ENCODE measurements at regions of chr10 and their contacts with region 1.

Region 1: GRCh38 chr10:123994417-123995081 is 98.8 kb downstream of the CHST15 start:
- DNase-seq: peak; percentile 58 to 88 (median 76)
- ATAC-seq: peak; percentile 76
- H3K4me3 ChIP-seq: peak overlapping the region; percentile 32
- H3K4me3 Mint-ChIP-seq: peak overlapping the region; percentile 52 to 82 (median 62)
- H3K27ac ChIP-seq: no peak overlapping the region
- H3K27ac Mint-ChIP-seq: no peak overlapping the region
- H3K4me1 ChIP-seq: peaks cover 9% of the 10 kb centered on the region in 2 donors
- H3K4me1 Mint-ChIP-seq: peaks cover 7 to 20% (median 13%) of the 10 kb centered on the region in 7 donors
- H3K27me3 ChIP-seq: peaks cover 0 to 17% of the 10 kb centered on the region in 2 donors
- H3K27me3 Mint-ChIP-seq: peaks cover 48 to 73% (median 58%) of the 10 kb centered on the region in 5 donors

Region 2: GRCh38 chr10:124020876-124021815 is 26.6 kb after region 1 on chr10:
- CTCF ChIA-PET with region 1: no interaction called
- POLR2A ChIA-PET with region 1: no interaction called
- intact Hi-C with region 1: no loop called
- DNase-seq: no peak
- ATAC-seq: no peak
- H3K4me3 ChIP-seq: no peak overlapping the region
- H3K4me3 Mint-ChIP-seq: no peak overlapping the region
- H3K27ac ChIP-seq: no peak overlapping the region
- H3K27ac Mint-ChIP-seq: no peak overlapping the region
- H3K4me1 ChIP-seq: no peaks in the 10 kb centered on the region
- H3K4me1 Mint-ChIP-seq: peaks cover 0 to 14% (median 8%) of the 10 kb centered on the region in 7 donors
- H3K27me3 ChIP-seq: no peaks in the 10 kb centered on the region
- H3K27me3 Mint-ChIP-seq: peaks cover 0 to 4% (median 3%) of the 10 kb centered on the region in 5 donors

Region 3: GRCh38 chr10:124221356-124222317 is 227.1 kb after region 1 on chr10:
- CTCF ChIA-PET with region 1: no interaction called
- POLR2A ChIA-PET with region 1: no interaction called
- intact Hi-C with region 1: loop called in 1 of 2 experiments (anchors 1 kb)
- DNase-seq: no peak
- ATAC-seq: no peak
- H3K4me3 ChIP-seq: no peak overlapping the region
- H3K4me3 Mint-ChIP-seq: peak overlapping the region in 1 of 10 donors; percentile 37
- H3K27ac ChIP-seq: no peak overlapping the region
- H3K27ac Mint-ChIP-seq: peak overlapping the region in 1 of 9 donors; percentile 33
- H3K4me1 ChIP-seq: no peaks in the 10 kb centered on the region
- H3K4me1 Mint-ChIP-seq: peaks cover 0 to 25% (median 0%) of the 10 kb centered on the region in 7 donors
- H3K27me3 ChIP-seq: no peaks in the 10 kb centered on the region
- H3K27me3 Mint-ChIP-seq: peaks cover 0 to 14% (median 5%) of the 10 kb centered on the region in 5 donors

Region 4: GRCh38 chr10:124259139-124259825 is 264.7 kb after region 1 on chr10:
- CTCF ChIA-PET with region 1: no interaction called
- POLR2A ChIA-PET with region 1: no interaction called
- intact Hi-C with region 1: loop called in 1 of 2 experiments (anchors 1 kb)
- DNase-seq: no peak
- ATAC-seq: no peak
- H3K4me3 ChIP-seq: no peak overlapping the region
- H3K4me3 Mint-ChIP-seq: no peak overlapping the region
- H3K27ac ChIP-seq: no peak overlapping the region
- H3K27ac Mint-ChIP-seq: no peak overlapping the region
- H3K4me1 ChIP-seq: no peaks in the 10 kb centered on the region
- H3K4me1 Mint-ChIP-seq: no peaks in the 10 kb centered on the region
- H3K27me3 ChIP-seq: no peaks in the 10 kb centered on the region
- H3K27me3 Mint-ChIP-seq: peaks cover 0 to 1% (median 0%) of the 10 kb centered on the region in 5 donors

Region 5: DNA sequence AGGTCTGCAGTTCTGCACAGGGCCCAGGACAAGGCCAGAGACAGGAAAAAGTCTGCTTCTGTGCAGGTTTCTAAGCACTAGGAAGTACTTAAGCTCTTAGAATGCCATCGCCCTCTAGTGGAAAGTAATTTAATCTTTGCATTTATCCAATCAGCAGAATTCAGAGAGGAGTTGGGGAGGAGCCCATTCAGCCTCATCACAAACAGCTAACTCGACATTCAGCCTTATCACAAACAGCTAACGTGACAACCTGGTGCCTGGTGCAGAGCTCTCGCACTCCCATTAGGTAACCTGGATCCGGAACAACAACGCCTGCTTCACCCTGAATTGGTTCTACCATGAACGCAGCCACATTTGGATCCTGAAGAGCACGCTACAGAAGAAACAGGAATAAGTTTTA is 409.0 kb after region 1 on chr10:
- CTCF ChIA-PET with region 1: interaction called, 6 read pairs
- POLR2A ChIA-PET with region 1: no interaction called
- intact Hi-C with region 1: loop called (anchors 1 kb)
- DNase-seq: peak in 7 of 9 donors; percentile 49 to 74 (median 67)
- ATAC-seq: peak; percentile 100
- H3K4me3 ChIP-seq: no peak overlapping the region
- H3K4me3 Mint-ChIP-seq: peak overlapping the region in 1 of 10 donors; percentile 38
- H3K27ac ChIP-seq: no peak overlapping the region
- H3K27ac Mint-ChIP-seq: peak overlapping the region; percentile 28 to 95 (median 75)
- H3K4me1 ChIP-seq: peaks cover 0 to 10% of the 10 kb centered on the region in 2 donors
- H3K4me1 Mint-ChIP-seq: peaks cover 8 to 11% (median 10%) of the 10 kb centered on the region in 7 donors
- H3K27me3 ChIP-seq: no peaks in the 10 kb centered on the region
- H3K27me3 Mint-ChIP-seq: no peaks in the 10 kb centered on the region

Region 6: DNA sequence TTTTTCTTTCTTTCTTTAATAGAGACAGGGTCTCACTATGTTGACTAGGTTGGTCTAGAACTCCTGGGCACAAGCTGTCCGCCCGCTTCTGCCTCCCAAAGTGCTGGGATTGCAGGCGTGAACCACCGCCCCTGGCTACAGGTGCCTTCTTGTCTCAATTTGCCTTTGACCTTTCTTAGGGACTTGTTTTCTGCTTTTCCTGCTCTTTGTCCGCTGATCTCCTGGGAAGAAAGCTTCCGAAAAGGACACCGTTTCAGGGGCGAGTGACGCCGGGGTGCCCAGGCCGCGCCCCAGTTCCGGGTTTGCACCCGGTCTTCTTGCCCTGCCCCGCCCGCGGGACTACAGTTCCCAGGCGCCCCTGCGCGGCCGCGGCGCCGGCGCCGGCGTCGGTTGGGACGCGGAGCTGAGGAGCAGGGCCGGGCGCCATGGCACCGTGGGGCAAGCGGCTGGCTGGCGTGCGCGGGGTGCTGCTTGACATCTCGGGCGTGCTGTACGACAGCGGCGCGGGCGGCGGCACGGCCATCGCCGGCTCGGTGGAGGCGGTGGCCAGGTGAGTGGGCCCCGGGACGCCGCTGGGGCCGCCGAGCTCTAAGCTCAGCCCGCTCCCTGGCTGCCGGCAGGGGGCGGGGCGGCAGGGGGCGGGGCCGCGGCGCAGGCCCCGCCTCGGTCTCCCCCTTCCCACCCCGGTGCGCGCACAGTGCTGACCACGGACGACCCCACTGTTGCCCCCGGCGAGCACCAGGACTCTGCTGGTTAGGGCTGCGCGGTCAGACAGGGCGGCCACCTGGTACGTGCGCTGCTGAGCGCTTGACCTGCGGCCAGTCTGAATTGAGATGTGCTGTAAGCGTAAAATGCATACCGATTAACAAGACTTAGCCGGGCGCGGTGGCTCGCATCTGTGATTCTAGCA is 467.1 kb after region 1 on chr10 and contains the start of gene LHPP:
- CTCF ChIA-PET with region 1: no interaction called
- POLR2A ChIA-PET with region 1: no interaction called
- intact Hi-C with region 1: loop called in 1 of 2 experiments (anchors 1 kb)
- DNase-seq: peak; percentile 77 to 91 (median 87)
- ATAC-seq: peak; percentile 98
- H3K4me3 ChIP-seq: peak within 1 kb of the TSS; percentile 76
- H3K4me3 Mint-ChIP-seq: peak within 1 kb of the TSS; percentile 69 to 96 (median 90)
- H3K27ac ChIP-seq: peak within 1 kb of the TSS; percentile 76
- H3K27ac Mint-ChIP-seq: peak within 1 kb of the TSS; percentile 82 to 98 (median 96)
- H3K4me1 ChIP-seq: peaks cover 13 to 21% of the 10 kb centered on the region in 2 donors
- H3K4me1 Mint-ChIP-seq: peaks cover 23 to 35% (median 28%) of the 10 kb centered on the region in 7 donors
- H3K27me3 ChIP-seq: no peaks in the 10 kb centered on the region
- H3K27me3 Mint-ChIP-seq: peaks cover 0 to 17% (median 11%) of the 10 kb centered on the region in 5 donors
- total RNA-seq, gene LHPP: 19.8 to 31.2 (median 27.6) TPM

Region 7: DNA sequence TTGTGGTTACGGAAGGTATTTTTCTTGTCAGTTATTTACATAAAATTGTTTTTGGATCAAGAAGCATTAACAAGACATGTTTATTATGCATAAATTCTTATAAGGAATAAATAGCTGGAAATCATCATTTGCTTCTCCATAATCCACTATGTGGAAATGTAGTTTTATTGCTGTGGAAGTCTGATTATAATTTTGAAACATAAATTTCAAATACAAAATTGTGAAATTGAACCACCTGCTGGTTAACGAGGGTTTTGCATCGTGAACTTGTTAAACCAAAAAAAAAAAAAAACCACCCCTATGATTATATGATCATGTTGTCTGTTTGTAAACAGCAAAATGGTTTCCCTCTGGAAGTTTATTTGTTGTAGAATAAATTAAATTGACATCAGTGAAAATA is 832.9 kb after region 1 on chr10:
- CTCF ChIA-PET with region 1: interaction called, 3 read pairs
- POLR2A ChIA-PET with region 1: no interaction called
- intact Hi-C with region 1: loop called in 1 of 2 experiments (anchors 10 kb)
- DNase-seq: peak in 5 of 9 donors; percentile 4 to 21 (median 8)
- ATAC-seq: no peak
- H3K4me3 ChIP-seq: no peak overlapping the region
- H3K4me3 Mint-ChIP-seq: no peak overlapping the region
- H3K27ac ChIP-seq: no peak overlapping the region
- H3K27ac Mint-ChIP-seq: no peak overlapping the region
- H3K4me1 ChIP-seq: no peaks in the 10 kb centered on the region
- H3K4me1 Mint-ChIP-seq: no peaks in the 10 kb centered on the region
- H3K27me3 ChIP-seq: no peaks in the 10 kb centered on the region
- H3K27me3 Mint-ChIP-seq: no peaks in the 10 kb centered on the region

Measured in naive thymus-derived CD4-positive, alpha-beta T cell (primary cell).